ENCODE measurements at regions of chr14 and their contacts with region 1.

Region 1: GRCh38 chr14:98138666-98139065 is 1133.3 kb downstream of the BCL11B start:
- DNase-seq: peak; percentile 35 to 87 (median 81)
- ATAC-seq: peak; percentile 75
- H3K4me3 ChIP-seq: peak overlapping the region; percentile 52
- H3K4me3 Mint-ChIP-seq: peak overlapping the region; percentile 75 to 99 (median 93)
- H3K27ac ChIP-seq: peak overlapping the region; percentile 78
- H3K27ac Mint-ChIP-seq: peak overlapping the region; percentile 90 to 99 (median 96)
- H3K4me1 ChIP-seq: peaks cover 70 to 76% of the 10 kb centered on the region in 2 donors
- H3K4me1 Mint-ChIP-seq: peaks cover 66 to 100% (median 96%) of the 10 kb centered on the region in 7 donors
- H3K27me3 ChIP-seq: no peaks in the 10 kb centered on the region
- H3K27me3 Mint-ChIP-seq: no peaks in the 10 kb centered on the region

Region 2: GRCh38 chr14:97602438-97603117 is 536.1 kb before region 1 on chr14:
- CTCF ChIA-PET with region 1: interaction called, 4 read pairs
- POLR2A ChIA-PET with region 1: interaction called, 3 read pairs
- intact Hi-C with region 1: loop called in 1 of 2 experiments (anchors 2 kb)
- DNase-seq: peak; percentile 39 to 92 (median 89)
- ATAC-seq: peak; percentile 94
- H3K4me3 ChIP-seq: peak overlapping the region; percentile 37
- H3K4me3 Mint-ChIP-seq: no peak overlapping the region
- H3K27ac ChIP-seq: peak overlapping the region; percentile 80
- H3K27ac Mint-ChIP-seq: no peak overlapping the region
- H3K4me1 ChIP-seq: peaks cover 57 to 64% of the 10 kb centered on the region in 2 donors
- H3K4me1 Mint-ChIP-seq: peaks cover 0 to 31% (median 4%) of the 10 kb centered on the region in 7 donors
- H3K27me3 ChIP-seq: no peaks in the 10 kb centered on the region
- H3K27me3 Mint-ChIP-seq: no peaks in the 10 kb centered on the region

Region 3: DNA sequence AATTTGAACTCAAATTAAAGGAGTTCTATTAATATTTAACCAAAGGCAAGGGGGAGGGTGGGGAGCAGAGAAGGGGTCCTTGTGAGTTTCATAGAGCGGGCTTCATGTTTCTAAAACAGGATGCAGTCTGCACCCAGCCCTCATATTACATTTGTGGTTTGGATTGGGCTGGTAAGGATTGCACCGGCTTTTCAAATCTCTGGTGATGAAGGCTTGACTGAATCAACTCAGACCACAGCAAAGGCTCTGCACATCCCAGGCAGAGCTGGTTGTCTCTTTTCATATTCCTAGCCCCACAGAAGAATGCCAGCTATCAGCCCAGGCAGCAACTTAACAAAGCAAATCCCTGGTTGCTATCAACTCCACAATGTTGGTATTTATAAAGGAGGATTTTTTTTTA is 120.0 kb before region 1 on chr14:
- CTCF ChIA-PET with region 1: interaction called, 7 read pairs
- POLR2A ChIA-PET with region 1: interaction called, 14 read pairs
- intact Hi-C with region 1: no loop called
- DNase-seq: peak in 7 of 9 donors; percentile 62 to 81 (median 74)
- ATAC-seq: peak; percentile 75
- H3K4me3 ChIP-seq: no peak overlapping the region
- H3K4me3 Mint-ChIP-seq: peak overlapping the region in 8 of 10 donors; percentile 9 to 65 (median 54)
- H3K27ac ChIP-seq: no peak overlapping the region
- H3K27ac Mint-ChIP-seq: peak overlapping the region in 8 of 9 donors; percentile 36 to 91 (median 79)
- H3K4me1 ChIP-seq: peaks cover 0 to 70% of the 10 kb centered on the region in 2 donors
- H3K4me1 Mint-ChIP-seq: peaks cover 30 to 81% (median 73%) of the 10 kb centered on the region in 7 donors
- H3K27me3 ChIP-seq: no peaks in the 10 kb centered on the region
- H3K27me3 Mint-ChIP-seq: no peaks in the 10 kb centered on the region

Region 4: DNA sequence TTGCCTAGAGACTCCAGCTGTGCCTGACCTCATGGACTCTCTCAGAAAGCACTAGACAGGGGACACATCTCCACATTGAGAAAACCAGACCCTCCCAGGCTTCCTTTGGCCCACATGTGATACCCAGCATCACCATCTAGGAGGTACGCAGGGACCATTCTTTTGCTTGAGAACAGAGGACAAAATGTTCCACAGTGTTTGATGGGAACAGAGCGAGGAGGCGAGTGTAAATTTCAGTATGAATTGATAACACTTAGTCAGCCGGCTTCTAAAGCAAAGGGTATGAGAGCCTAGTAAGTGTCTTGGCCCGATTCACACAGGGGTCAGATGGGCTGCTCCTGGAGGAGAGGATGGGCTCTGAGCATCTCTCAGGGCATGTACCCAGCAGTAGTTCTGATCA is 81.0 kb after region 1 on chr14:
- CTCF ChIA-PET with region 1: interaction called, 7 read pairs
- POLR2A ChIA-PET with region 1: interaction called, 15 read pairs
- intact Hi-C with region 1: loop called (anchors 1 to 2 kb)
- DNase-seq: no peak
- ATAC-seq: no peak
- H3K4me3 ChIP-seq: no peak overlapping the region
- H3K4me3 Mint-ChIP-seq: peak overlapping the region in 4 of 10 donors; percentile 2 to 49 (median 33)
- H3K27ac ChIP-seq: no peak overlapping the region
- H3K27ac Mint-ChIP-seq: peak overlapping the region in 4 of 9 donors; percentile 60 to 83 (median 71)
- H3K4me1 ChIP-seq: peaks cover 32 to 76% of the 10 kb centered on the region in 2 donors
- H3K4me1 Mint-ChIP-seq: peaks cover 26 to 49% (median 29%) of the 10 kb centered on the region in 7 donors
- H3K27me3 ChIP-seq: no peaks in the 10 kb centered on the region
- H3K27me3 Mint-ChIP-seq: no peaks in the 10 kb centered on the region

Region 5: DNA sequence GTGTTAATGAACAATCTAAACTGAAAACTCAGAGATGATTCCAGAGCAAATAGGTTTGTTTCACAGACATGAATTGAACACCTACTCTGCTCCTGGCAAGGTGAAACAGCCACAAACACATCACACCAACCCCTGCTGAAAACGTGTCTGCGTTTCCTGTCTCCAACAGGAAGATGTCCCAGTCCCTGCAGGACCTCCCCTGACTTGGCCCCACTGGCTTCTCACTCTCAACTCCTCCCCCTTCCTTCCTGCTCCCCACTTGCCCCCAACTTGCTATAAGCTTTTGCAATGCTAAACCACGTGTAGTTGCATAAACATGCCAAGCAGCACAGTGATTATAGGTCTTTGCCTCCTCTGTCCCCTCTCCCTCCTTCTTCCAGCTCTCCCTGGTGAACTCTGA is 565.8 kb after region 1 on chr14:
- CTCF ChIA-PET with region 1: no interaction called
- POLR2A ChIA-PET with region 1: no interaction called
- intact Hi-C with region 1: loop called in 1 of 2 experiments (anchors 10 kb)
- DNase-seq: peak in 7 of 9 donors; percentile 26 to 62 (median 53)
- ATAC-seq: peak; percentile 79
- H3K4me3 ChIP-seq: no peak overlapping the region
- H3K4me3 Mint-ChIP-seq: peak overlapping the region; percentile 7 to 75 (median 46)
- H3K27ac ChIP-seq: no peak overlapping the region
- H3K27ac Mint-ChIP-seq: peak overlapping the region in 8 of 9 donors; percentile 1 to 78 (median 53)
- H3K4me1 ChIP-seq: peaks cover 17 to 27% of the 10 kb centered on the region in 2 donors
- H3K4me1 Mint-ChIP-seq: peaks cover 17 to 63% (median 35%) of the 10 kb centered on the region in 7 donors
- H3K27me3 ChIP-seq: no peaks in the 10 kb centered on the region
- H3K27me3 Mint-ChIP-seq: peaks cover 0 to 2% (median 0%) of the 10 kb centered on the region in 5 donors

Region 6: GRCh38 chr14:99266181-99267178 is 1127.8 kb after region 1 on chr14:
- CTCF ChIA-PET with region 1: interaction called, 53 read pairs
- POLR2A ChIA-PET with region 1: interaction called, 212 read pairs
- intact Hi-C with region 1: loop called in 1 of 2 experiments (anchors 1 kb)
- DNase-seq: peak; percentile 79 to 93 (median 89)
- ATAC-seq: peak; percentile 56
- H3K4me3 ChIP-seq: peak overlapping the region; percentile 90
- H3K4me3 Mint-ChIP-seq: peak overlapping the region; percentile 92 to 100 (median 94)
- H3K27ac ChIP-seq: peak overlapping the region; percentile 98
- H3K27ac Mint-ChIP-seq: peak overlapping the region; percentile 99 to 100 (median 100)
- H3K4me1 ChIP-seq: peaks cover 16 to 39% of the 10 kb centered on the region in 2 donors
- H3K4me1 Mint-ChIP-seq: peaks cover 43 to 66% (median 54%) of the 10 kb centered on the region in 7 donors
- H3K27me3 ChIP-seq: no peaks in the 10 kb centered on the region
- H3K27me3 Mint-ChIP-seq: peaks cover 0 to 10% (median 0%) of the 10 kb centered on the region in 5 donors